ENCODE measurements at regions of chr1 and their contacts with region 1.

Region 1: GRCh38 chr1:172466795-172467407 is 23.0 kb upstream of the PIGC start:
- DNase-seq: no peak
- ATAC-seq: peak in 1 of 8 donors; percentile 27
- H3K4me3 ChIP-seq: no peak overlapping the region
- H3K27ac ChIP-seq: no peak overlapping the region
- H3K4me1 ChIP-seq: peaks cover 0 to 10% (median 0%) of the 10 kb centered on the region in 9 donors
- H3K27me3 ChIP-seq: no peaks in the 10 kb centered on the region
- CTCF ChIP-seq: no peak

Region 2: DNA sequence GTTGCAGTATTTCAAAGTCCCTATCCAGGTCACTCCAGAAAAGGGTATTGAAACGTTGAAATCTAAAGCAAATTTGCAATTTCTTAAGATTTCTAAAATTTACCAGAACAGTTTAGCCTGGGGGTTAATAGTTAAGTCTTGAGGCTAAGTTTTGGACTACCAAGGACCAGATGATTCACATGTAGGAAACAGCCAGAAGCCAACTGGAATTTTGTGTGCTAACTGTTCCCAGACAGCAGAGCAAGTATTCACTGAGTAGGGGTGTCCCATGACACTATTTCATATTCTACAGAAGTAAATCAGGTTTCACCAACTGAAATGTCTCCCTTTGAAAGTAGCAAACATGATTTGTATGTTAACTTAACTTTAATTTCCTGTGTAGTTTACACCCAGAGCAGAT is 57.9 kb before region 1 on chr1:
- intact Hi-C with region 1: no loop called
- DNase-seq: no peak
- ATAC-seq: no peak
- H3K4me3 ChIP-seq: no peak overlapping the region
- H3K27ac ChIP-seq: no peak overlapping the region
- H3K4me1 ChIP-seq: peaks cover 0 to 6% (median 0%) of the 10 kb centered on the region in 9 donors
- H3K27me3 ChIP-seq: no peaks in the 10 kb centered on the region
- CTCF ChIP-seq: no peak

Region 3: GRCh38 chr1:172532700-172533509 is 66.0 kb after region 1 on chr1 and contains the start of gene SUCO:
- intact Hi-C with region 1: loop called in 1 of 10 experiments (anchors 5 kb)
- DNase-seq: peak; percentile 100
- ATAC-seq: peak; percentile 95 to 99 (median 97)
- H3K4me3 ChIP-seq: peak within 1 kb of the TSS; percentile 66 to 93 (median 84)
- H3K27ac ChIP-seq: peak within 1 kb of the TSS; percentile 93 to 99 (median 97)
- H3K4me1 ChIP-seq: peaks cover 10 to 50% (median 39%) of the 10 kb centered on the region in 9 donors
- H3K27me3 ChIP-seq: no peaks in the 10 kb centered on the region
- CTCF ChIP-seq: peak in 4 of 9 donors; percentile 23 to 37 (median 26)
- total RNA-seq, gene SUCO: 18.5 to 31.4 (median 27.0) TPM